ENCODE measurements at regions of chr10 and their contacts with region 1.

Region 1: DNA sequence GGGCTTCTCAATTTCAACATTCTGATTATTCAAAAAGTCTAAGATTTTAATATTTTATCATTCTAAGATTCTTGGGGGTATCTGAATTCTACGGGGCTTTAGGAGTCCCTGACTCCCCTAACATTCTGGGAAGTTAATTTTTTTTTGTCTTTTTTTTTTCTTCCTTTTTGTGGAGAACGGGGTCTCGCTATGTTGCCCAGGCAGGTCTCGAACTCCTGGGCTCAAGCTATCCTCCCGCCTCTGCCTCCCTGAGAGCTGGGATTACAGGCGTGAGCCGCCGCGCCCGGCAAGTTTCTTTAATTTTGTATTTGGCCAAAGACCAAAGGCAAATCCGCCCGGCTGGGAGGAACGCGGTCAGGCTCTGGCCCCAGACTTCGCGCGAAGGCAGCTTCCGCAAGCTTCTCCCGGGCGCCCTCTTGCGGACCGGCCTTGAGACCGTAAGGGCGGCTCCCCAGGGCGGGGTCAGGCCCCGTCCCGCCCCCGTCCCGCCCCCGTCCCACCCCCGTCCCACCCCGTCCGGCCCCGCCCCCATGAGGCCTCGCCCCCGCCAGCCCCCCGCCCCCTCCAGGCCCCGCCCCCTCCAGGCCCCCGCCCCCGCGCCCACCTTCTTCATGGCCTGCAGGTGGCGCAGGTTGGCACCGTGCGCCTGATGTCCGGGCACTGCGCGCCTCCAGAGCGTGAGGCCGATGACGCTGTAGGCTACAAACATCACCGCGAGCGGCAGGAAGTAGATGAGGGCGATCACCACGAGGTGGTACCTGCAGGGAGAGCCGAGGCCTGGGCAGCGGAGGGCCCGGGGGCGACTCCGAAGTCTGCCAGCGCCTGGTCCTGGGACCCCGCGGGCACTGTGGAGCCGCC is 8.2 kb downstream of the TACR2 start:
- DNase-seq: peak; percentile 98
- H3K4me3 ChIP-seq: peak overlapping the region; percentile 35 to 39; a peak in 3 of 4 replicates
- H3K27ac ChIP-seq: peak overlapping the region; percentile 46 to 50; a peak in 3 of 4 replicates
- H3K4me1 ChIP-seq: peaks cover 0 to 20% of the 10 kb centered on the region in 2 experiments; a peak in 2 of 4 replicates
- H3K27me3 ChIP-seq: no peaks in the 10 kb centered on the region
- CTCF ChIP-seq: peak; percentile 51
- EP300 ChIP-seq: no peak
- RAD21 ChIP-seq: peak; percentile 41; the same call in 1 of the 2 replicates

Region 2: DNA sequence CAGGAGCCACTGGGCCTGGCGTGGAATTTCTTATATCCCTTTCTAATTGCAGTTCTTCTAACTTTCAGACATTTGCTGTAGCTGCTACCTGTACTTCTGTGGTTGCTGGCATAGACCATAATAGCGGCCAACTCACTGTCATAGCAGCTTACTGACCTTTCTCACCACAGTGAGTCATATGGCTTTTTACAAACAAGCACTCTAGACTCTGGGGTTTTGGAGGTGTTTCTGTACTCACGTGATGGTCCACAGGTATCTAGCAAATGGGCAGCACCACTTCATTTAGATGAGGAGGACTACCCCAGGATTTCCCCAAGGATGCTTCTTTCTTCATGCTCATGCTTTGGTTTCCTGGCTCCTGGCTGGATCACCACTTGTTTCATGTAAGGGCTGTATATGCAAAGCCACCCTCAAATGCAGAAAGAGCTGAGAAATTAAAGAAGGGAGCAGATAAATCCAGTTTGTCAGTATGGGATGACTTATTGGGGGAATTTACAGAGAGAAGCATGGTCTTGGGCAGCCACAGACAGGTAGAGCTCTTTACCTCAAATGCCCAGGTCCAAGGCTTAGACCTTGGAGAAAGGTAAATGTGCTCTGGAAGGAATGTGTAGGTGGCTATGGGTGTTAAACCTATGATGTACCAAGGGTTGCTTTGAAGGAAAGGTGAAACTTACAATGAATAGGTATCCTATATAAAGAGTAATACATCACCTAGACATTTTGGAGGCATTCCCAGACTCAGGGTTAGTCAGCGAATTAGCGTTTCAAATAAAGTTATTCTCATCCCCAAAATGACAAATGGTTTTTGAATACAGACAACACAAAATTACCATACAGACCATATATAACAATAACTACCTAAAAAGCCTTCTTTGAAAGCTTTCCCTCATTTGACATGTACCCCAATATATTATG is 865.3 kb before region 1 on chr10:
- CTCF ChIA-PET with region 1: no interaction called
- POLR2A ChIA-PET with region 1: no interaction called
- DNase-seq: no peak
- H3K4me3 ChIP-seq: no peak overlapping the region
- H3K27ac ChIP-seq: no peak overlapping the region
- H3K4me1 ChIP-seq: no peaks in the 10 kb centered on the region
- H3K27me3 ChIP-seq: no peaks in the 10 kb centered on the region
- CTCF ChIP-seq: no peak
- EP300 ChIP-seq: no peak; a peak in 1 of 4 replicates
- RAD21 ChIP-seq: no peak

Region 3: GRCh38 chr10:69237528-69238159 is 170.9 kb before region 1 on chr10:
- CTCF ChIA-PET with region 1: interaction called, 30 read pairs
- POLR2A ChIA-PET with region 1: no interaction called
- DNase-seq: peak; percentile 87
- H3K4me3 ChIP-seq: peak overlapping the region in 1 of 2 experiments; percentile 41; a peak in 1 of 4 replicates
- H3K27ac ChIP-seq: no peak overlapping the region
- H3K4me1 ChIP-seq: no peaks in the 10 kb centered on the region
- H3K27me3 ChIP-seq: no peaks in the 10 kb centered on the region
- CTCF ChIP-seq: peak; percentile 88
- EP300 ChIP-seq: no peak
- RAD21 ChIP-seq: peak; percentile 94

Region 4: DNA sequence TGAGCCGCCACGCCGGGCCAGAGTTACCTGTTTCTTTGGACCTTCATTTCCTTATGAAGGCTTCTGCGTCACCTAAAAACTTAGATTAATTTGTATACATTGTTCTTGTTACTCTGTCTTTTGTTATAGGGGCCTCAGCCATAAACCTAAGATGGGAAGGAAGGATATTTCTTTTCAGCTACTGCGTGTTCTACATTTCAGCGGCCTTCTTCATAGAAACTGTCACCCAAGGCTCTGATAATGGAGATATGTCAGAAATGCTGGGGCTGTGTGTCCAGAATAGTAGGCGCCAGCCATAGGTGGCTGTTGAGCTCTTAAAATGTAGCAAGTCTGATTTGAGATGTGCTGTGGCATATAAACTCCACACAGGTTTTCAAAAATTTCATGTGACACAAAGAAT is 77.4 kb before region 1 on chr10:
- CTCF ChIA-PET with region 1: no interaction called
- POLR2A ChIA-PET with region 1: no interaction called
- DNase-seq: no peak
- H3K4me3 ChIP-seq: no peak overlapping the region
- H3K27ac ChIP-seq: no peak overlapping the region
- H3K4me1 ChIP-seq: peaks cover 6 to 40% of the 10 kb centered on the region in 2 experiments; a peak in 3 of 4 replicates
- H3K27me3 ChIP-seq: no peaks in the 10 kb centered on the region
- CTCF ChIP-seq: no peak
- EP300 ChIP-seq: no peak
- RAD21 ChIP-seq: no peak

Region 5: GRCh38 chr10:69377933-69378332 is 30.6 kb before region 1 on chr10:
- CTCF ChIA-PET with region 1: no interaction called
- POLR2A ChIA-PET with region 1: no interaction called
- DNase-seq: no peak
- H3K4me3 ChIP-seq: no peak overlapping the region
- H3K27ac ChIP-seq: peak overlapping the region in 1 of 2 experiments; percentile 49; a peak in 1 of 4 replicates
- H3K4me1 ChIP-seq: peaks cover 0 to 7% of the 10 kb centered on the region in 2 experiments; a peak in 3 of 4 replicates
- H3K27me3 ChIP-seq: no peaks in the 10 kb centered on the region
- CTCF ChIP-seq: no peak
- EP300 ChIP-seq: no peak
- RAD21 ChIP-seq: no peak

Region 6: GRCh38 chr10:69397972-69398371 is 10.6 kb before region 1 on chr10:
- CTCF ChIA-PET with region 1: interaction called, 55 read pairs
- POLR2A ChIA-PET with region 1: no interaction called
- DNase-seq: peak; percentile 76
- H3K4me3 ChIP-seq: no peak overlapping the region
- H3K27ac ChIP-seq: peak overlapping the region in 1 of 2 experiments; percentile 81; a peak in 2 of 4 replicates
- H3K4me1 ChIP-seq: peaks cover 0 to 21% of the 10 kb centered on the region in 2 experiments; a peak in 2 of 4 replicates
- H3K27me3 ChIP-seq: no peaks in the 10 kb centered on the region
- CTCF ChIP-seq: no peak
- EP300 ChIP-seq: peak in 1 of 2 experiments; percentile 82; a peak in 2 of 4 replicates
- RAD21 ChIP-seq: no peak

Region 7: GRCh38 chr10:69492091-69492750 is 83.7 kb after region 1 on chr10:
- CTCF ChIA-PET with region 1: interaction called, 12 read pairs
- POLR2A ChIA-PET with region 1: no interaction called
- DNase-seq: no peak
- H3K4me3 ChIP-seq: no peak overlapping the region
- H3K27ac ChIP-seq: no peak overlapping the region; a peak in 1 of 4 replicates
- H3K4me1 ChIP-seq: peaks cover 0 to 19% of the 10 kb centered on the region in 2 experiments; a peak in 1 of 4 replicates
- H3K27me3 ChIP-seq: no peaks in the 10 kb centered on the region
- CTCF ChIP-seq: no peak
- EP300 ChIP-seq: no peak
- RAD21 ChIP-seq: no peak

Region 8: GRCh38 chr10:69506834-69507721 is 98.5 kb after region 1 on chr10:
- CTCF ChIA-PET with region 1: interaction called, 43 read pairs
- POLR2A ChIA-PET with region 1: interaction called, 4 read pairs
- DNase-seq: peak; percentile 21
- H3K4me3 ChIP-seq: no peak overlapping the region
- H3K27ac ChIP-seq: no peak overlapping the region
- H3K4me1 ChIP-seq: peaks cover 0 to 4% of the 10 kb centered on the region in 2 experiments; a peak in 1 of 4 replicates
- H3K27me3 ChIP-seq: no peaks in the 10 kb centered on the region
- CTCF ChIP-seq: no peak
- EP300 ChIP-seq: no peak
- RAD21 ChIP-seq: no peak

Measured in SK-N-SH (cell line).